PC-3 (cell line): ENCODE measurements at regions of chr1 and their contacts with region 1.

Region 1: DNA sequence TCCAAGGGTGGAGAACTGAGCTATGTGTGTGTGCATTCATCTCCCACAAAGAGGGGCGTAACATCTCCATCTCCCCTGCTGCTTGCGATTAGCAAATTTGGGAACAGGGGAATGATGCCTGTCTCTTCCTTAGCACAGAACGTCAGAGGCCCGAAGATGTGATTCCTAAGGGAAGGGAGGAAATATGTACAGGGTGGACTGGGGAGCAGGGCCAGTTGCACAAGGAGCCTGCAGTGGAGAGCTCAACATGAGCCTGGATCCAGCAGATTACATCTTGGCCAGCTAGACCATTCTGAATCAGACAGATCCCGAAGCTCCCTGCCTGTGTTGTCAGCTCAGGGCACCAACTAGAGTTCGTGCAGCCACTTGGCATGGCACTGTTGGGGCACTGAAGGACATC is 118.1 kb downstream of the NGF start:
- DNase-seq: no peak
- ATAC-seq: no peak
- H3K4me3 ChIP-seq: no peak overlapping the region
- H3K27ac ChIP-seq: no peak overlapping the region
- H3K4me1 ChIP-seq: peaks cover 49% of the 10 kb centered on the region
- H3K27me3 ChIP-seq: no peaks in the 10 kb centered on the region
- CTCF ChIP-seq: no peak

Region 2: DNA sequence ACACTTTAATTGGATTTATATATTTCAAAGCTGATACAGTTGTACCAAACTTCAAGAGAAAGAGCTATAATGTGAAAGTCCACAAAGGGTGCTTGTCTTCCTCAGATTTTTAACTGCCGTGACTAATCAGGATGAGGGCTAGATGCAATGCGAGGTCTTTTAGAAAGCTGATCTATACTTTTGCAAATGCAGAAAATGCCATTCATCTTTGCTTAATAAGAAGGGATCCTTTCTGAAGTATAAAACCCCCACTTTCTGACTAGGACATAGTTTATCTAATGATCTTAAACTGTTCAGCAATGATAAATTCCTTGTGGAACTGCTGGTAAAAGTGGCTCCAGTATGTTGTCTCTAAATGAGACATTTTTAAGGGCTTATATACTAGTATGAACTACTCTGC is 220.8 kb after region 1 on chr1:
- CTCF ChIA-PET with region 1: no interaction called
- POLR2A ChIA-PET with region 1: interaction called, 10 read pairs
- intact Hi-C with region 1: no loop called
- DNase-seq: peak; percentile 75
- ATAC-seq: peak; percentile 89
- H3K4me3 ChIP-seq: no peak overlapping the region
- H3K27ac ChIP-seq: peak overlapping the region; percentile 28
- H3K4me1 ChIP-seq: peaks cover 21% of the 10 kb centered on the region
- H3K27me3 ChIP-seq: no peaks in the 10 kb centered on the region
- CTCF ChIP-seq: no peak

Region 3: DNA sequence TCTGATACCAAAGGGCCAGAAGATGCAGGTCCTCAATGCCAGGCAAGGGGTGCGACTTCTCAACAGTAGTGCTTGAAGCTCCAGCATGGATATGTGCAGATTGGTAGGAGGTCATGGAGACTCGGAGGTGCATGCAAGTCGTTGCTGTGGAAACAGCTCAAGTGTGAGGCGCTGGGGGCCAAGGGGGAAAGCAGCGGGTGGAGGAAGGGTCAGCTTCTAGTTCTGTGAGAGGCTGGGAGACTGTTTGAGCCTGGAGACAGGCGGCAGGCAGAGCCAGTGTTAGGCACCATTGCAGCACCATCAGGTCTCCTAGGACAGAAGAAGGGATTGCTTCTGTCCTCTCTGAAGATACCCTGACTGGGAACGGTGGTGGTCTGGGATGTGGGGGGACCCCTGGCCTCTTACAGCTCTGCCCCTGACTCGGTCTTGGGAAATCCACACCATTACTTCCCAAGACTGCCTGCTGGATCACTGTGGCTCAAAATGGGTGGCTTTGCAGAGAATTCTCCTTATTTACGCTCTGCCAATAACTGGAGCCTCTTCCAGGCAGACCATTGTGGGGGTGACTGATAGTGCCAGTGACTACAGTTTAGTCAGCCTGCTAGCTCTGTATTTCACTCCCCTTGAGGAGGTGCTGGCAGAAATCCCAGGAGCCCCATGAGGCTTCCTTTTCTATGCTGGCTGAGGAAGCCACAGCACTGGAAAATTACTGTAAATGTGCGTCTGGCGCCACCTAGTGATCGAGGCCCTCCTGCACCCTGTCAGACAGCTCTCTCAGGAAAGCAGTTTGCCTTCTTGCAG is 375.5 kb after region 1 on chr1:
- CTCF ChIA-PET with region 1: no interaction called
- POLR2A ChIA-PET with region 1: no interaction called
- intact Hi-C with region 1: loop called (anchors 5 kb)
- DNase-seq: peak; percentile 97
- ATAC-seq: peak; percentile 96
- H3K4me3 ChIP-seq: no peak overlapping the region
- H3K27ac ChIP-seq: peak overlapping the region; percentile 1; the same call in 1 of the 2 replicates
- H3K4me1 ChIP-seq: peaks cover 20% of the 10 kb centered on the region
- H3K27me3 ChIP-seq: no peaks in the 10 kb centered on the region
- CTCF ChIP-seq: peak; percentile 96